PC-3 (cell line): ENCODE measurements at regions of chr2 and their contacts with region 1.

Region 1: DNA sequence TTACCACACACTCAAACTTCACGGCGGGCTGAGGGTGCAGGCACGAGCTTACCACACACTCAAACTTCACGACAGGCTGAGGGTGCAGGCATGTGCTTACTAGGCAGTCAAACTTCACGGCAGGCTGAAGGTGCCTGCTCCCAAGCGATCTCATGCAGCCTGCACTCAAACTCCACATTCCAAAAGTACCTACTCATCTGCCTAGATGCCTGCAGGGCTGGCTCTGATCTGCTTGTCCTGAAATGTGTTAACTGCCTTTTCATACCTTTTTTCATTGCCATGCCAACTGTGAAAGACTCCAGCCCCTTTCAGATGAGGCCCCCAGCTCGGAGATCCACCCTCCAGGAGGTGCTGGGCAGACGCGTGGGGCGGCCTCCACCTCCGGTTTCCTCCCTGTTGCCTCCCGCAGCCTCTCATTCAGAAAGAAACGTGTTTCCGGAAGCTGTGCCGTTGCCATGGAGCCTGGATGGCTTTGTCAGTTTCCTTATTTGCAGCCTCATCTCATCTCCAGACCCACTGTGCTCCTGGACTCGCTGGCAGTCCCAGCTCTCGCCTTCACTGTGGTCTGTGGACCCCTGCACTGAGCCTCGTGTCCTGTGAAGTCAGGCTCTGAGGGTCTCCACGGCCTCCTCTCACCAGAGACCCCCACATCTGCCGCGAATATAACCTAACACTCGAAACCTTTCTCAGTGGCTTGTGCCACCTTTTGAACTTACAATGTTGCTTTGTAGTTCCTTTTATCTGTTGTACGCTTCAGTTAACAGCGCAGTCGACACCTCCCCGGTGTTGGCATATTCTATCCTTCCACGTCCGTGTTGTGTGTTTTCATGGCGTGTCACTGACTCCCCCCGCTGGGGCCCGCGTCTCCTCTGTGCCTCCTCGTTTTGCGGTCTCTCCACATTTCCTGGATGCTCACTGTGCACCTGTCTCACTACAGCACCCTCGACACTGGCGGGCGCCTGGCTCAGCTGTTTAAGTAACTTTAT is 106.1 kb upstream of the ALKAL2 start:
- DNase-seq: peak; percentile 88
- ATAC-seq: peak; percentile 94
- H3K4me3 ChIP-seq: peak overlapping the region; percentile 32; the same call in 1 of the 2 replicates
- H3K27ac ChIP-seq: peak overlapping the region; percentile 38
- H3K4me1 ChIP-seq: peaks cover 28% of the 10 kb centered on the region
- H3K27me3 ChIP-seq: no peaks in the 10 kb centered on the region
- CTCF ChIP-seq: no peak

Region 2: DNA sequence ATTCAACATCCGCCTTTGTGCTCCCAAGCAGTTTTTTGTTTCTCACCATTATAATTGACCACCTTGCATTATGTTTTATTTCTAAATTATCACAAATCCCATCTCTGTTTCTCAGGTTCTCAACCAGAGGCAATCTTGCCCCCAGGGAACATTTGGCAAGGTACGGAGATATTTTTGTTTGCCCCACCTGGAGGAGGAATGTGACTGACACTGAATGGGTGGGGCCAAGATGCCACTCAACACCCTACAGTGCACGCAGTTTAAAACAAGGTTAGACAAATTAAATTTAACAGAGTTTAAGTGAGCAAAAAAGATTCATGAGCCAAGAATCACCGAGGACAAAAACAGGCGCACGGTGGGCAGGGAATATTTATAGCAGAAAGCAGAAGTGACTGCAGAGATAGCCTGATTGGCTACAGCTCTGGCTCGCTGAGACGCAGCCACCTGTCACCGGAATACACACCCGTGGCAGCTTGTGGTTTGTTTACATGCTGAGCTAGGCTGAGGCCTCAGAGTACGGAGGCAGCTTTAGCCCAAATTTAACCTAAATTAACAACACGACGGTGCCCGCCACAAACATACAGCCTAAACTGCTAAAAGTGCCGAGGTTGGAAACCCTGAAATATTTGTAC is 43.9 kb after region 1 on chr2:
- CTCF ChIA-PET with region 1: no interaction called
- POLR2A ChIA-PET with region 1: no interaction called
- intact Hi-C with region 1: loop called (anchors 5 kb)
- DNase-seq: peak; percentile 72
- ATAC-seq: peak; percentile 90
- H3K4me3 ChIP-seq: peak overlapping the region; percentile 63
- H3K27ac ChIP-seq: peak overlapping the region; percentile 33; the same call in 1 of the 2 replicates
- H3K4me1 ChIP-seq: peaks cover 12% of the 10 kb centered on the region
- H3K27me3 ChIP-seq: no peaks in the 10 kb centered on the region
- CTCF ChIP-seq: no peak

Region 3: DNA sequence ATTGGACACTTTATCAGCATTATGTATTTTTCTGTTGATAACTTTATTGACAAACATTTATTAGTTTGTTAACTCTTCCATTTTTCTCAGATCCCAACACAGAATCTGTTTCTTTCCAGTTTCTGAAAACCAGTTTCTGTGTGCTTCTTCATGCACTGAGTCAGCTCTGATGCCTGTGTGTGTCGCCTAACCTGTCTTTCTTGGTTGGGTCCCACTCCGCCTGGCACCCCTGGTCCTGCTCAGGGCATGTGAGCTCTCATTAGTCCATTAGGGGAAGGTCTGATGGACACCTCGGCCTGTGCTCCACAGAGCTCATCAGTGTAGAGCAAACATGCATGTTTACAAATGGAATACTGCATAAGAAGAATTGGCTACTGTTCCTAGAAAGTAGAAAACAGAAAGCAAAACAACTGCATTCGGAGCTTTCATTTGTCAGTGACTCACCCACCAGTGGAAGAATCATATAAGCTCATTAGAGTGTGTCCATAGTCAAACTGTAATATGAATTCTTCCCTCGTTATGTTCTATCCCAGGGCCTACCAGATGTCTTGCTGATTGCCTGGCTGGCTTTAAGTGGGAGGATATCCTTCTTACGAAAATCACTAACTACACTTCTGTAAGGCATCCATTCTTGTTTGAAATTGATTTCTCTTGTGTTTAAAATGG is 694.3 kb after region 1 on chr2:
- CTCF ChIA-PET with region 1: no interaction called
- POLR2A ChIA-PET with region 1: no interaction called
- intact Hi-C with region 1: no loop called
- DNase-seq: peak; percentile 2
- ATAC-seq: no peak
- H3K4me3 ChIP-seq: no peak overlapping the region
- H3K27ac ChIP-seq: no peak overlapping the region
- H3K4me1 ChIP-seq: no peaks in the 10 kb centered on the region
- H3K27me3 ChIP-seq: peaks cover 28% of the 10 kb centered on the region
- CTCF ChIP-seq: no peak